Caco-2 (cell line): ENCODE measurements at regions of chr12 and their contacts with region 1.

Region 1: DNA sequence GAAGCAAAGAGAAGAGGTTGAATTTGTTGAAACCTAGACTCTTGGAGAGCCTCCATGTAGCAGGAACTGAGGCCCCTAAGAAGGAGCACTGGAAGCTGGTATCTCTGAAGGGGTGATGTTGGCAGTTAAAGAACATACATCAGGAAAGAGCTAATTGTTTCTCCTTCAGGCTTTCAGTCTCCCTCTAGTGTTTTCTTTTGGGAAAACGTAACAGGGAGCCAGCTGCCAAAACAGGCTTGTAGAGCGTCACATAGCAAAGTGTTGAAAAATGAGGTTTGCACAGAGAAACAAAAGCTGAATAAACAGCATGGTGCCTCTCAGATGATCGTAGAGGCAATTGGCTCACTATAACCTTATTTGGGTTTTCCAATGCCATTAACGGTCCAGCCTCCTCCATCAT is 46.9 kb upstream of the CAND1 start:
- DNase-seq: peak in 1 of 2 experiments; percentile 32
- H3K4me3 ChIP-seq: no peak overlapping the region
- H3K4me3 Mint-ChIP-seq: no peak overlapping the region
- H3K27ac Mint-ChIP-seq: no peak overlapping the region
- H3K4me1 ChIP-seq: no peaks in the 10 kb centered on the region
- H3K4me1 Mint-ChIP-seq: no peaks in the 10 kb centered on the region
- H3K27me3 ChIP-seq: no peaks in the 10 kb centered on the region; the same call in 1 of the 2 replicates
- H3K27me3 Mint-ChIP-seq: peaks cover 21% of the 10 kb centered on the region
- CTCF ChIP-seq: peak; percentile 35 to 63

Region 2: DNA sequence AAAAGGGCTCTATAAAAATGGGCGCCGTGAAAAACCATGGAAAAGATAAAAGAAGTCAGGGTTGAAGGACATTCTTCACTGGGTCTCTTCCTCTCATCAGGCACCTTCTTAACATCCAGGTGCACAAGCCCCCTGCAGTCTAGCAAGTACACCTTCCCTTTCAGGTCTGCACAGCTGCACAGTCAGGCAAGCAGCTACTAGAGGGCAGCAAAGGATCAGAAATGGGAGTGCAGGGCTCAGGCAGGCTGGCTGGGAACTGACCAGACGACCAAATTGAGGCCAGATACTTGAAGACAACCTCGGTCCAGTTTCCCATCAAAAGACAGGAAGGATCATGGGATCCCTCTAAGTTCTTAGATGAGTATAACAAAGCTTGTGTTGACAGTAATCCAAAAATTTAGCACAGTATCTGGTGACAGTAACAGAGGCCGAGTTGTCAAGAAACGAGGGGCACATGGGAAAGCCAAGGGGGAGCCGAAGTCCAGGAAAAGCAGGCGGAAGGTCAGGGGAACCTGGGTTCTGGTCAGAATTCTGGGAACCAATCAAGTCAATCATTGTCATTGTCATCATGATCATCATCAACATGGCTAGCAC is 533.4 kb before region 1 on chr12:
- CTCF ChIA-PET with region 1: no interaction called
- POLR2A ChIA-PET with region 1: no interaction called
- intact Hi-C with region 1: loop called (anchors 2 kb)
- DNase-seq: peak; percentile 81 to 82
- H3K4me3 ChIP-seq: no peak overlapping the region
- H3K4me3 Mint-ChIP-seq: no peak overlapping the region
- H3K27ac Mint-ChIP-seq: no peak overlapping the region
- H3K4me1 ChIP-seq: no peaks in the 10 kb centered on the region
- H3K4me1 Mint-ChIP-seq: no peaks in the 10 kb centered on the region
- H3K27me3 ChIP-seq: no peaks in the 10 kb centered on the region
- H3K27me3 Mint-ChIP-seq: peaks cover 11% of the 10 kb centered on the region
- CTCF ChIP-seq: peak; percentile 66 to 87

Region 3: GRCh38 chr12:66903782-66904396 is 318.4 kb before region 1 on chr12:
- CTCF ChIA-PET with region 1: interaction called, 3 read pairs
- POLR2A ChIA-PET with region 1: no interaction called
- intact Hi-C with region 1: loop called (anchors 2 kb)
- DNase-seq: no peak
- H3K4me3 ChIP-seq: no peak overlapping the region
- H3K4me3 Mint-ChIP-seq: no peak overlapping the region
- H3K27ac Mint-ChIP-seq: no peak overlapping the region
- H3K4me1 ChIP-seq: no peaks in the 10 kb centered on the region
- H3K4me1 Mint-ChIP-seq: no peaks in the 10 kb centered on the region
- H3K27me3 ChIP-seq: no peaks in the 10 kb centered on the region
- H3K27me3 Mint-ChIP-seq: peaks cover 2% of the 10 kb centered on the region
- CTCF ChIP-seq: no peak

Region 4: GRCh38 chr12:67025543-67026114 is 196.7 kb before region 1 on chr12:
- CTCF ChIA-PET with region 1: interaction called, 5 read pairs
- POLR2A ChIA-PET with region 1: no interaction called
- intact Hi-C with region 1: loop called (anchors 2 kb)
- DNase-seq: peak; percentile 47 to 70
- H3K4me3 ChIP-seq: no peak overlapping the region
- H3K4me3 Mint-ChIP-seq: no peak overlapping the region
- H3K27ac Mint-ChIP-seq: no peak overlapping the region
- H3K4me1 ChIP-seq: peaks cover 3% of the 10 kb centered on the region; the same call in 1 of the 2 replicates
- H3K4me1 Mint-ChIP-seq: peaks cover 7% of the 10 kb centered on the region
- H3K27me3 ChIP-seq: no peaks in the 10 kb centered on the region
- H3K27me3 Mint-ChIP-seq: peaks cover 15% of the 10 kb centered on the region
- CTCF ChIP-seq: peak; percentile 70 to 76

Region 5: DNA sequence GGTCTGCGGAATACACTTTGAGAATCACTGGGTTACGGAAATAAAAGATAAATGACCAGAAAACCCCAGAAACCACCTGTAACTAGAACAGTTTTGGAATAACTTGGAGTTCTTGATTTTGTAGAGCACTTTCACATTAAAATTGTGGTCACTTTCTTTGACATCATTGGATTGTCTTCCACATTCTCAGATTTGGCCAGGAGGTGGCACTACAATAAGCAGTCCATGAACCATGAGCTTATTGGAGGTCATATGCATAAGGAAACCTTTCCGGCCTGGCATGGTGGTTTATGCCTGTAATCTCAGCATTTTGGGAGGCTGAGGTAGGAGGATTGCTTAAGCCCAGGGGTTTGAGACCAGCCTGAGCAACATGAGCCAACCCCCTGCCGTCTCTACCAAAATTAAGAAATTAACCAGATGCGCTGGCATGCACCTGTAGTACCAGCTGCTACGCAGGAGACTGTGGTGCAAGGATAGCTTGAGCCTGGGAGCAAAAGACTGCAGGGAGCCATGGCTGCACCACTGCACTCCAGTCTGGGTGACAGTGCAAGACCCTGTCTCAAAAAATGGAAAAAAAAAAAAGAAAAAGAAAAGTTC is 60.9 kb before region 1 on chr12:
- CTCF ChIA-PET with region 1: interaction called, 12 read pairs
- POLR2A ChIA-PET with region 1: no interaction called
- intact Hi-C with region 1: loop called (anchors 1 kb)
- DNase-seq: peak; percentile 37 to 40
- H3K4me3 ChIP-seq: no peak overlapping the region
- H3K4me3 Mint-ChIP-seq: no peak overlapping the region
- H3K27ac Mint-ChIP-seq: no peak overlapping the region
- H3K4me1 ChIP-seq: no peaks in the 10 kb centered on the region
- H3K4me1 Mint-ChIP-seq: no peaks in the 10 kb centered on the region
- H3K27me3 ChIP-seq: no peaks in the 10 kb centered on the region
- H3K27me3 Mint-ChIP-seq: peaks cover 21% of the 10 kb centered on the region
- CTCF ChIP-seq: peak; percentile 41 to 50